Right ventricle myocardium inferior (tissue), 1 donor: ENCODE measurements at regions of chr2 and their contacts with region 1.

Region 1: DNA sequence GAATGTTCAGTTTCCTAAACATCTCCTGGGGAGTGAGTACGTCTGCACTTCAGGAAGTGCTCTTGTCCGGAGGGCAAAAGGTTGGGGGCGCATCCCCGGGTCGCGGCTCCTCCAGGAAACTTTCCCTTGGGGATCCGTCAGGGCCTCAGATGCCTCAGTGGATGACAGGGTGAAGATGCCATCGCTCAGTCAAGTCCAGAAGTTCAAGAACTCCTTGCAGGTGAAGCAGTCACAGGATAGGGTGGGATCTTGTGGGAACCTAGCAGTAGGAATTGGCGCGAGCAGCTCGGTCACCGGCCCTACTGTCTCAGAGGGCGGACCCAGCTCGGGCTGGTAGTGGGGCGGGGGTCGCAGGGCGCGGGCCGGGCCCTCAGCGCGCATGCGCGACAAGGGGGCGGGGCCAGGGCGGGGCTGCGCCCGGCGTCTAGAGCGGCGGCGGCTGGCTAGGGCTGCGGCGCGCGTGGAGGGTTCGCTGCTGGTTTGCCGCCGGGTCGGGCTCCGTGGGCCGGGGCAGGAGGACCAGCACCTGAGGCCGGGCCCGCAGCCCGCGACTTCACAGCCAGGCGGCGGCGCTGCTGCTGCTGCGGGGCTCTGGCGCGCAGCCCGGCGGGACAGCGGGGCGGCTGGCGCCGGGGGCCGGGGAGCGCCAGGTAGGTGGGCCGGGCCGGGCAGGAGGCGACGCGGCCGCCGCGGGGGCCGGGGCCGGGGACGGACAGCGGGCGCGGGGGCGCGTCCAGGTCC is at the start of gene INPP4A:
- DNase-seq: peak; percentile 92
- ATAC-seq: peak; percentile 94
- total RNA-seq, gene INPP4A: 14.7 TPM

Region 2: DNA sequence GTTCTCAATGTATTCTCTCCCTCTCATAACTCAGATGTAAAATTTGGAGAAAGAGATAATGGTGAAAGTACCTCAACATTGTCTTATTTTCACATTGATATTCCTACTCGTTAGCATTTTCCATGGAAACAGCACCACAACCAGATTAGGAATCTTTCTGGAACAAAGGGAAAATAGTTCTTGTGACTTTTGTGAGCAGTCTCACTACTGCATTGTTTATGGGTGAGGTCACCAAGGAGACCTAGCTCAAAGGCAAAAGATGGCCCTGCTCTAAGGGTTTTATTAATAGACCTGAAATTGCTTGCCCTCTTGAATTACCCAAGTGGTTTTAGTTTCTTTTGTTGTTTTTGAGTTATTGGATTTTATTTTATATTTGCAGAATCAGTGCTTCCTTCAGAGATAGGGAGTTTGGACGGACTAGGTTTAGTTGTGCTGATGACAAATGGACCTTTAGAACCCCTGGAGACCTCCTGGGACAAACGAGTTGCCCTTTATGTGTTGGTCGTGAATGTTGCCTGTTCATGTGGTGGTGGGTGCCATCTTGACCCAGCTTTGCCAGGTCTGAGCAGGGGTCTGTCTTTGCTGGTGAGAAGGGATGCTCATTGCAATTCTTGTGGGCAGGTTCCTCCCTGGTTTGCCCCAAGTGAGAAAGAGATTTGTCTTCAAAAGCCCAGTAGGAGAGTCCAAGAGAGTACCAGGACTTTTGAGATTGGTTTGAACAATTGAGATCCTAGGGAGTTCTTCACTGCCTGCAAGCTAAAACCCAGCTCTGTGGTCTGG is 58.1 kb after region 1 on chr2:
- intact Hi-C with region 1: loop called (anchors 5 kb)
- DNase-seq: no peak
- ATAC-seq: no peak

Region 3: GRCh38 chr2:98568881-98569793 is 124.5 kb after region 1 on chr2:
- intact Hi-C with region 1: loop called (anchors 10 kb)
- DNase-seq: no peak
- ATAC-seq: no peak